ENCODE measurements at regions of chr14 and their contacts with region 1.

Region 1: DNA sequence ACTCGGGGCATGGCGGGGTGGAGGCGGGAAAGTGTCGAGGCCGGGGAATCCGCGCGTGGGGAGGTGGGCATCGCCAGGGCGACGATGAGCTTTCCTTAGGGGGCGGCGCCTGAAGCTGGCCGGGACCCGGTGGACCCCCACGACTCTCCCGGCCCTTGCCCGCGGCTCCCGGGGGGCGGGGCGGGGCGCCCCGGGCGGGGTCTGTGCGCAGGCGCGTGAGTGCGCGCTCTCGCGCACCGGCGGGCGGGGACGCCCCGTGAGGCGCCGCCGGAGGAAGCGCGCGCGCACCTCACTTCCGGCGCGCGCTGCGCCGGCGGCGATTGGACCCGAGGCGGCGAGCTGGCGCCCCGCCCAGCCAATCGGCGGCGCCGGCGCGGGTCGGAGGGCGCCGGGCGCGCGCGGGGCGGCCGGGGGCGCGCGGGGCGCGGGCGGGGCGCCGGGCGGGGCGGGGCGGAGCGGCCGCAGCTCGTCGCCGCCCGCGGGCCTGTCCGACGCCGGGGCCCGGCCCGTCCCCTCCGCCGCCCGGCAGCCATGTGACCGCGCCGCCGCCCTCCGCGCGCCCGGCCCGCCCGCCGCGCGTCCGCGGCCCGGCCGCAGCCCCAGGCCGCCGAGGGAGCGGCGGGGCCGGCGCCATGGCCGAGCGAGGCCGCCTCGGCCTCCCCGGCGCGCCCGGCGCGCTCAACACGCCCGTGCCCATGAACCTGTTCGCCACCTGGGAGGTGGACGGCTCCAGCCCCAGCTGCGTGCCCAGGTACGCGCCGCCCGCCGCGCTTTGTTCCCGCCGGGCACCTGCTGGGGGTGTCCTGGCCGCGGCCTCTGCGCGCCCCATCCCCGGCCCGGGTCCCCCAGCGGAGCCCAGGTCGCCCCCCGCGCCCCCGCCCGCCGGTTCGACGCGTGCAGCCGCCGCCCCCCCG is at the start of gene PACS2:
- DNase-seq: peak; percentile 61 to 87 (median 83)
- H3K4me3 ChIP-seq: peak within 1 kb of the TSS; percentile 49 to 52
- H3K4me3 Mint-ChIP-seq: peak within 1 kb of the TSS; percentile 84 to 93 (median 86)
- H3K27ac ChIP-seq: peak within 1 kb of the TSS; percentile 62
- H3K27ac Mint-ChIP-seq: peak within 1 kb of the TSS; percentile 86 to 94 (median 90)
- H3K4me1 ChIP-seq: peaks cover 22% of the 10 kb centered on the region
- H3K4me1 Mint-ChIP-seq: peaks cover 7 to 31% (median 22%) of the 10 kb centered on the region in 4 donors
- H3K27me3 ChIP-seq: no peaks in the 10 kb centered on the region
- H3K27me3 Mint-ChIP-seq: no peaks in the 10 kb centered on the region
- total RNA-seq, gene PACS2: 70.9 to 76.6 TPM

Region 2: GRCh38 chr14:105065280-105066228 is 249.0 kb before region 1 on chr14 and contains the start of gene GPR132:
- CTCF ChIA-PET with region 1: no interaction called
- POLR2A ChIA-PET with region 1: interaction called, 10 read pairs
- intact Hi-C with region 1: no loop called
- DNase-seq: peak; percentile 93 to 99 (median 96)
- H3K4me3 ChIP-seq: peak within 1 kb of the TSS; percentile 89 to 97
- H3K4me3 Mint-ChIP-seq: peak within 1 kb of the TSS; percentile 89 to 97 (median 95)
- H3K27ac ChIP-seq: peak within 1 kb of the TSS; percentile 93
- H3K27ac Mint-ChIP-seq: peak within 1 kb of the TSS; percentile 92 to 100 (median 99)
- H3K4me1 ChIP-seq: peaks cover 91% of the 10 kb centered on the region
- H3K4me1 Mint-ChIP-seq: peaks cover 34 to 85% (median 62%) of the 10 kb centered on the region in 4 donors
- H3K27me3 ChIP-seq: no peaks in the 10 kb centered on the region
- H3K27me3 Mint-ChIP-seq: no peaks in the 10 kb centered on the region
- total RNA-seq, gene GPR132: 47.3 to 49.2 TPM

Region 3: GRCh38 chr14:105093431-105094192 is 220.9 kb before region 1 on chr14:
- CTCF ChIA-PET with region 1: no interaction called
- POLR2A ChIA-PET with region 1: interaction called, 3 read pairs
- intact Hi-C with region 1: loop called (anchors 1 kb)
- DNase-seq: peak; percentile 36 to 65 (median 48)
- H3K4me3 ChIP-seq: peak overlapping the region; percentile 36 to 58
- H3K4me3 Mint-ChIP-seq: peak overlapping the region; percentile 60 to 85 (median 68)
- H3K27ac ChIP-seq: peak overlapping the region; percentile 65
- H3K27ac Mint-ChIP-seq: peak overlapping the region in 1 of 7 donors; percentile 52
- H3K4me1 ChIP-seq: peaks cover 28% of the 10 kb centered on the region
- H3K4me1 Mint-ChIP-seq: peaks cover 10 to 32% (median 18%) of the 10 kb centered on the region in 4 donors
- H3K27me3 ChIP-seq: no peaks in the 10 kb centered on the region
- H3K27me3 Mint-ChIP-seq: peaks cover 0 to 1% of the 10 kb centered on the region in 2 donors

Region 4: GRCh38 chr14:105248368-105248756 is 66.2 kb before region 1 on chr14 and contains the start of gene BTBD6:
- CTCF ChIA-PET with region 1: no interaction called
- POLR2A ChIA-PET with region 1: interaction called, 18 read pairs
- intact Hi-C with region 1: no loop called
- DNase-seq: peak; percentile 87 to 90 (median 90)
- H3K4me3 ChIP-seq: peak within 1 kb of the TSS; percentile 42 to 71
- H3K4me3 Mint-ChIP-seq: peak within 1 kb of the TSS; percentile 77 to 84 (median 80)
- H3K27ac ChIP-seq: peak within 1 kb of the TSS; percentile 63
- H3K27ac Mint-ChIP-seq: peak within 1 kb of the TSS; percentile 68 to 89 (median 87)
- H3K4me1 ChIP-seq: peaks cover 19% of the 10 kb centered on the region
- H3K4me1 Mint-ChIP-seq: peaks cover 14 to 48% (median 19%) of the 10 kb centered on the region in 4 donors
- H3K27me3 ChIP-seq: no peaks in the 10 kb centered on the region
- H3K27me3 Mint-ChIP-seq: no peaks in the 10 kb centered on the region
- total RNA-seq, gene BTBD6: 52.0 to 56.7 TPM

Region 5: DNA sequence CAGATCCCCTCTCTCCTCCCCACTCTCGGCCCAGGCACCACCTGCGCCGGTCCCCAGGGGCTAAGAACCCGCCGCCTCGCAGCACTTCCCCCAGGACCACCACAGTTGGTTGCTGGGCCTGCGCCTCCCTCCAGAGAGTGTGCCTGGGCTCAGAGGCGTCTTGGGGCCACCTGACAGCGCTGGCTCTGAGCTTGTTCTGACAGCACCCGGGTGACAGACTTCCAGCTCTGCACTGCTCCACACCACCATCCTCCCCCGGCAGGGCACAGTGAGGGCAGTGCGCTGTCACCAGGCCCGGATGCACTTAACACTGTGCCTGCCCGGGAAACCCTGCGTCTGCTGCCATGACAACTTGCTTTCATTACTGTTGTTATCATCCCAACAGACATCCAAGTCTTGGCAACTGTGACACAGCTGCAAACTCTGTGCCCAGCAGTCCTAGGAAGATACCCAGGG is 20.4 kb before region 1 on chr14:
- CTCF ChIA-PET with region 1: no interaction called
- POLR2A ChIA-PET with region 1: interaction called, 136 read pairs
- intact Hi-C with region 1: no loop called
- DNase-seq: peak; percentile 54 to 81 (median 70)
- H3K4me3 ChIP-seq: no peak overlapping the region
- H3K4me3 Mint-ChIP-seq: peak overlapping the region; percentile 36 to 83 (median 72)
- H3K27ac ChIP-seq: peak overlapping the region; percentile 46
- H3K27ac Mint-ChIP-seq: peak overlapping the region; percentile 88 to 100 (median 97)
- H3K4me1 ChIP-seq: peaks cover 35% of the 10 kb centered on the region
- H3K4me1 Mint-ChIP-seq: peaks cover 18 to 56% (median 35%) of the 10 kb centered on the region in 4 donors
- H3K27me3 ChIP-seq: no peaks in the 10 kb centered on the region
- H3K27me3 Mint-ChIP-seq: no peaks in the 10 kb centered on the region

Measured in CD4-positive, alpha-beta memory T cell (primary cell).